ENCODE measurements at regions of chr11 and their contacts with region 1.

Region 1: GRCh38 chr11:125091247-125091876 is 20.1 kb downstream of the TMEM218 start:
- DNase-seq: peak; percentile 58
- H3K4me3 ChIP-seq: no peak overlapping the region
- H3K27ac ChIP-seq: peak overlapping the region; percentile 52
- H3K27me3 ChIP-seq: no peaks in the 10 kb centered on the region
- CTCF ChIP-seq: peak; percentile 80

Region 2: DNA sequence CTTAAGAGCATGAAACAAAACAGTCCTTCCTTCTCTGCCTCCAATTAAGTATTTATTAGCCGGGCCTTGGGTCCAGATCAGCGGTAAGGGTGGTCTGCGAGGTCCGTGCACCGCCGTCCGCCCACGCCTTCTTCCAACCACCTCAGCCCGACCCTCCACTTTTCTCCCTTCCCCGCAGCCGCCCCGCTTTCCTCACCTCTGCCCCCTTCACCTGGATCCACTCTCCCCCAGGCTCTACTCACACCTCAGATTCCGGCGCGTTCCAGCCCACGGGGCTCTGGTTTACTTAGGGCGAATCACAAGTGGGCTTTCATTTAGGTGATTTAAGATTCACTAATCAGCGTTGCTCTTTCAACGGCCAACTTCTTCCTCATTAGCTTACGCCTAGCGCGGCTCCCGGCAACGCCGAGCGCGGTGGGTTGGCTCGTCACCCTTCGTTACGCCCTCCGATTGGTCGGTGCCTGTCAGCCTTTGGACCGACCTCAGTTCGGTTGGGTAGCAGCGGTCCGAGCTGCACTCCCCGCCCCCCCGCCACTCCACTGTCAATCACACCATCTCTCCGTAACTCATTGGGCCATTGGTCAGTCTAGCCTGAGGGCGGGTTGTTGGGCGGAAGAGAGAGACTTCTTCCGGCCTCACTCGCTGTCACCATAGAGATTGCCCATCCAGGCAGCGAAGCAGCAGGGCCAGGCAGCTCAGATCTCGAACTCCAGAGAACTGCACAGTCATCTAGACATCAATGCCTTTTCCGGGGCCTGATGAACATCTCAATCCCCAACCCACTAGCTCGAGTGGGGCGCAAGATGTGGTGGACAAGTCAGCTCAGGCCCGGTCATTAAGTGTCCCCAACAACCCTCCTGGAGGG is 20.2 kb after region 1 on chr11 and contains the start of gene TMEM218:
- CTCF ChIA-PET with region 1: interaction called, 19 read pairs
- POLR2A ChIA-PET with region 1: interaction called, 3 read pairs
- DNase-seq: peak; percentile 99
- H3K4me3 ChIP-seq: peak within 1 kb of the TSS; percentile 93
- H3K27ac ChIP-seq: peak within 1 kb of the TSS; percentile 54
- H3K27me3 ChIP-seq: no peaks in the 10 kb centered on the region
- CTCF ChIP-seq: no peak
- polyA plus RNA-seq, gene TMEM218: 28.4 and 29.9 TPM in 2 replicates

Region 3: DNA sequence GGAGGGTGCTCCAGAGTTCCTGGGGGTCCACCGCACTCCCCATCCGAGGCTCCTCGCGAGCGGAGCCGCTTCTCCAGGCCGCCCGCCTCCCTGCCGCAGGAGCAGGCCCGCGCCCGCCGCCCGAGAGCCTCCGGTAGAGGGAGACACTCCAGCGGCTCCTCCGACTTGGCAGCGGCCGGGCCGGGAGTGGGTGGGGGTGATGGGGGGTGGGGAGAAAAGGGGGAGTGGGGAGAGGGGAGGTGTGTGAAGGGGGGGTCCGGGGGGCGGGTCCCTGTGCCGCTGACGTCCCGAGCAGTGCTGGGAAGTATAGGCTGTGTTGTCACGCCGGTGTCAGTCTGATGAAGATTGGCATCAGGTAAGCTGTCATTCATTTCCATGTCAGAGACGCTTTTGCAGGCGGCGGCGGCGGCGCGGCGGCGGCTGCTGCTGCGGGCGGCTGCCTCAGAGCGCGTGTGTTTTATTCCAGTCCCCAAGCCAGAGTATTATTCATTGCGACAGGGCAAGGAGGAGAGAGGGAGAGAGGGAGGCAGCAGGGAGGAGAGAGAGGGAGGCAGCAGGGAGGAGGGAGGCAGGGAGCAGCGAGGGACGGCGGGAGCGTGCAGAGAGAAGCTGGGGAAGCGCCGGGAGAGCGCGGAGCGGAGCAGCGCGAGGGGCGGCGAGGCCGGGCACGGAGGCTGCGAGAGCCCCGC is 73.2 kb after region 1 on chr11 and contains the start of gene PKNOX2:
- CTCF ChIA-PET with region 1: interaction called, 23 read pairs
- POLR2A ChIA-PET with region 1: no interaction called
- DNase-seq: no peak
- H3K4me3 ChIP-seq: peak within 1 kb of the TSS; percentile 72
- H3K27ac ChIP-seq: peak within 1 kb of the TSS; percentile 65
- H3K27me3 ChIP-seq: peaks cover 11% of the 10 kb centered on the region
- CTCF ChIP-seq: peak; percentile 66
- polyA plus RNA-seq, gene PKNOX2: 3.0 and 3.6 TPM in 2 replicates

Region 4: GRCh38 chr11:125313271-125314219 is 222.2 kb after region 1 on chr11:
- CTCF ChIA-PET with region 1: no interaction called
- POLR2A ChIA-PET with region 1: no interaction called
- DNase-seq: no peak
- H3K4me3 ChIP-seq: no peak overlapping the region
- H3K27ac ChIP-seq: no peak overlapping the region
- H3K27me3 ChIP-seq: peaks cover 4% of the 10 kb centered on the region
- CTCF ChIP-seq: no peak

Region 5: GRCh38 chr11:125390946-125391345 is 299.6 kb after region 1 on chr11:
- CTCF ChIA-PET with region 1: interaction called, 10 read pairs
- POLR2A ChIA-PET with region 1: no interaction called
- DNase-seq: peak; percentile 43
- H3K4me3 ChIP-seq: no peak overlapping the region
- H3K27ac ChIP-seq: no peak overlapping the region
- H3K27me3 ChIP-seq: no peaks in the 10 kb centered on the region
- CTCF ChIP-seq: no peak

Region 6: DNA sequence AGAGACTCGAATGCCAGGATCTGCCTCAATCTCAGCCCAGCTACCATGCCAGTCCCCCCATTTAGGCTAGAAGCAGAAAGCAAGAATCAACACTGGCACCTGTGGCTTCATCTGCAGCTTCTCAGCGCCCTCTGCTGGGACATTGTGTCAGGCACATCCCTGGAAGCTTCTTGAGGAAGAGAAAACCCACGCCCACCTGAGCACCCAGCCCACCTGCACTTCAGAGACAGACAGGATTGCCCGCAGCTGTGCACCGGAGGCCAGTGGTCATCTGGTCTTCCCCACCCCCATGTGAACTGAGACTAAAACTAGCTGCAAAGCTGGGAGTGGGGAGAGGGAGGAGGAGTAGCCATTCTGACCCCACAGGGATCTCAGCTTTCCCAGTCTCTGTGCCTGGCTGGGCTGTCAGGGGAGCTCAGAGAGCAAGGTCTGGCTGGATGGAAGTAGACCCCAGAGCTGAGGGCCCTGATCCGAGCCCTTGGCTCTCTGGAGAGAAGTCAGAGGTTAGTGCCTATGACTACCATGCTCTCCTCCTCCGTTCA is 337.9 kb after region 1 on chr11:
- CTCF ChIA-PET with region 1: interaction called, 26 read pairs
- POLR2A ChIA-PET with region 1: no interaction called
- DNase-seq: no peak
- H3K4me3 ChIP-seq: no peak overlapping the region
- H3K27ac ChIP-seq: no peak overlapping the region
- H3K27me3 ChIP-seq: peaks cover 10% of the 10 kb centered on the region
- CTCF ChIP-seq: peak; percentile 79

Measured in AG04450 (cell line).